Endothelial cell of umbilical vein (primary cell): ENCODE measurements at regions of chr14 and their contacts with region 1.

Region 1: GRCh38 chr14:54566410-54567223 is at the start of gene SAMD4A:
- DNase-seq: peak; percentile 84
- H3K4me3 ChIP-seq: peak within 1 kb of the TSS; percentile 41 to 87 (median 75)
- H3K27ac ChIP-seq: peak within 1 kb of the TSS; percentile 80
- H3K4me1 ChIP-seq: peaks cover 38% of the 10 kb centered on the region
- H3K27me3 ChIP-seq: no peaks in the 10 kb centered on the region
- CTCF ChIP-seq: peak in 1 of 2 donors; percentile 34
- POLR2A ChIP-seq: no peak
- total RNA-seq, gene SAMD4A: 88.8 and 95.3 TPM in 2 replicates

Region 2: GRCh38 chr14:54488646-54489317 is 77.8 kb before region 1 on chr14 and contains the start of gene GMFB:
- CTCF ChIA-PET with region 1: interaction called, 5 read pairs
- POLR2A ChIA-PET with region 1: no interaction called
- dilution Hi-C with region 1: no loop called
- intact Hi-C with region 1: loop called (anchors 2 kb)
- DNase-seq: peak; percentile 95
- H3K4me3 ChIP-seq: peak within 1 kb of the TSS; percentile 72 to 91 (median 81)
- H3K27ac ChIP-seq: peak within 1 kb of the TSS; percentile 97
- H3K4me1 ChIP-seq: peaks cover 13% of the 10 kb centered on the region
- H3K27me3 ChIP-seq: no peaks in the 10 kb centered on the region
- CTCF ChIP-seq: peak; percentile 28 to 58
- POLR2A ChIP-seq: peak; percentile 95
- total RNA-seq, gene GMFB: 35.5 and 52.0 TPM in 2 replicates

Region 3: GRCh38 chr14:54593860-54594259 is 27.2 kb after region 1 on chr14:
- CTCF ChIA-PET with region 1: interaction called, 3 read pairs
- POLR2A ChIA-PET with region 1: no interaction called
- dilution Hi-C with region 1: no loop called
- intact Hi-C with region 1: loop called (anchors 2 kb)
- DNase-seq: peak; percentile 78
- H3K4me3 ChIP-seq: peak overlapping the region in 1 of 3 experiments; percentile 23
- H3K27ac ChIP-seq: peak overlapping the region; percentile 48
- H3K4me1 ChIP-seq: peaks cover 35% of the 10 kb centered on the region
- H3K27me3 ChIP-seq: no peaks in the 10 kb centered on the region
- CTCF ChIP-seq: no peak
- POLR2A ChIP-seq: no peak

Region 4: DNA sequence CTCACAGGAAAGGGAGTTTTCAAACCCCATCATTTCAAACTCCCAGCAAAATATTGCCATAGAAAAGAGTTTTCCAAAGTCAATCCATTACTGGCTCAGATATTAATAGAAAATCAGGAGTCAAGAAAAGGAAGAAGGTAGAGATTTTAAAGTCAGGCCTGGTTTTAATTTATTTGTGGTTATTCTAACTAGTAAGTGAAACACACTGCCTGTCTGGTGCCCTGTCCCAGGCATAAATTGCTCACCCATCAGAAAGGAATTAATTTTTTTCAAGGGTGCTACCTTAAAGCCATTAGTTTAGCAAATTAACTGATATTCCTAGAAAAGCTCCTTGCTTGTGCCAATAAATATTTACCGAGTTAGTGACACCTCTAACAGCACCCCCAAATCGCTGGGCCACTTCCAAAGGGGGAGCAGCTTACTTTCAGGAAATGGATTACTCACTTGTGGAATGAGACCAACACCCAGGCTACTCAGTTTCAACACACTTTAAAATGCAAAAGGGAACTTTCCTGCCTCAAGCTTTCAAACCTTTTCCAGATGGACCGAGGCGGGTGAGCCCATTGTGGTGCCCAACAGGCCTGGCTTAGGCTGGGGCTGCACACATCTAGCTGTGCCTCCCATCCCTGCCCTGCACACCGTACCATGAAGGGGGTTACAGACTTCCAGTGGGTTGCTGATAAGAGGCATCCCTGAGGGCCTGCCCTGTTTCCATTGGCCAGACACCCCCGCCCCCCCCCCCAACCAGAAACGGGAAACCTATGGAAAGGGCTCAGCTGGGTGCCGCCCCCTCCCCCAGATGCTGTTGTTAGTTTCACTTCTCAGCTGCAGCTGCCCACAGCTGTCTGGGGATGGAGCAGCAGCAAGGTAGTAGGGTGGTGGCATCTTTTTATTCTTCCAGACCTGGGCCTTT is 117.5 kb after region 1 on chr14:
- CTCF ChIA-PET with region 1: interaction called, 15 read pairs
- POLR2A ChIA-PET with region 1: interaction called, 14 read pairs
- dilution Hi-C with region 1: no loop called
- intact Hi-C with region 1: no loop called
- DNase-seq: peak; percentile 81
- H3K4me3 ChIP-seq: no peak overlapping the region
- H3K27ac ChIP-seq: peak overlapping the region; percentile 95
- H3K4me1 ChIP-seq: peaks cover 61% of the 10 kb centered on the region
- H3K27me3 ChIP-seq: no peaks in the 10 kb centered on the region
- CTCF ChIP-seq: no peak
- POLR2A ChIP-seq: no peak

Region 5: GRCh38 chr14:54727929-54728328 is 161.3 kb after region 1 on chr14:
- CTCF ChIA-PET with region 1: interaction called, 104 read pairs
- POLR2A ChIA-PET with region 1: interaction called, 9 read pairs
- dilution Hi-C with region 1: no loop called
- intact Hi-C with region 1: no loop called
- DNase-seq: no peak
- H3K4me3 ChIP-seq: no peak overlapping the region
- H3K27ac ChIP-seq: no peak overlapping the region
- H3K4me1 ChIP-seq: peaks cover 3% of the 10 kb centered on the region
- H3K27me3 ChIP-seq: no peaks in the 10 kb centered on the region
- CTCF ChIP-seq: no peak
- POLR2A ChIP-seq: no peak

Region 6: GRCh38 chr14:54805521-54806322 is 239.1 kb after region 1 on chr14:
- CTCF ChIA-PET with region 1: interaction called, 70 read pairs
- POLR2A ChIA-PET with region 1: no interaction called
- dilution Hi-C with region 1: no loop called
- intact Hi-C with region 1: loop called (anchors 1 kb)
- DNase-seq: peak; percentile 81
- H3K4me3 ChIP-seq: no peak overlapping the region
- H3K27ac ChIP-seq: no peak overlapping the region
- H3K4me1 ChIP-seq: no peaks in the 10 kb centered on the region
- H3K27me3 ChIP-seq: peaks cover 0 to 2% of the 10 kb centered on the region in 2 experiments
- CTCF ChIP-seq: peak; percentile 90 to 95
- POLR2A ChIP-seq: no peak

Region 7: DNA sequence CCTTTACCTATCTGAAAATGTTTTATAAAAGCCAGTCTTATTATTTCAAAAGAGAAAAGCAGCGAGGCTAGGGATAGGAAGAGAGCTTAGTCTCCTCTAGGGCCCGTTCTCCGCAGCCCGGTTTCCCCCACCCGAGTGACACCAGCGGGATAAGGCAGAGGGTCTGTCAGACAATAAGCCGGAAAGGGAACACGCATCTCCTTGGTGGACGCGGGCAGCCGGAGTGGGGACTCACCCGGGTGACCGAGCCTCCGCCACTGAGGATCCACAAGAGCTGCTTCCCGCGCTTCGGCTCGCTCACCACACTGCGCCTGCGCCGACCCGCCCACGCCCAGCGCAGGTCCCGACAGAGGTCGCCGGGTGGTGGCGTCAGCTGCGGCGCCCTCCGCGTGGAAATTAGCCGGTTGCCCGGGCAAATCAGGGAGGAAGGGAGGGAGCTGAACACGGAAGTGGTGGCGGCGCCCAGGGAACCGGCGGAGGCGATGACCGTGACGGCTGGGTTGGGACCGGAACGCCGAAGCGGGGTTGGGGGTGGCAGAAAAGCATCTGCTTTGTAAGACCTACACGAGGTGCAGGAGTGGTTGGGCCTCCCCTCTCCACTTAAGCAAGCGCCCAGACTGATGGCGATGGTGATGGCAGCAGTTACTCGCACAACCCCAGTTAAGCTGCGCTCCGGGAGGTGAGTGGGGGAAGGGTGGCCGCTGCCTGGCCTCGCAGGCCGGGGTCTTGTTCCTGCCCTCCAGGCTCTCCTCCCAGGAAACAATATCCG is 460.4 kb after region 1 on chr14 and contains the starts of genes SOCS4 and WDHD1:
- CTCF ChIA-PET with region 1: no interaction called
- POLR2A ChIA-PET with region 1: no interaction called
- dilution Hi-C with region 1: no loop called
- intact Hi-C with region 1: loop called (anchors 2 kb)
- DNase-seq: peak; percentile 97
- H3K4me3 ChIP-seq: peak within 1 kb of the TSS; percentile 68 to 96 (median 86)
- H3K27ac ChIP-seq: peak within 1 kb of the TSS; percentile 61
- H3K4me1 ChIP-seq: peaks cover 30% of the 10 kb centered on the region
- H3K27me3 ChIP-seq: no peaks in the 10 kb centered on the region
- CTCF ChIP-seq: no peak
- POLR2A ChIP-seq: peak; percentile 77
- total RNA-seq, gene SOCS4: 26.7 and 28.7 TPM in 2 replicates
- total RNA-seq, gene WDHD1: 22.5 TPM in 2 replicates